ENCODE measurements at regions of chr1 and their contacts with region 1.

Region 1: GRCh38 chr1:11735854-11736745 is at the start of gene AGTRAP:
- DNase-seq: peak; percentile 91 to 94 (median 92)
- H3K4me3 ChIP-seq: peak within 1 kb of the TSS; percentile 85 to 93 (median 88)
- H3K4me3 Mint-ChIP-seq: peak within 1 kb of the TSS; percentile 93 to 98
- H3K27ac ChIP-seq: peak within 1 kb of the TSS; percentile 98
- H3K27ac Mint-ChIP-seq: peak within 1 kb of the TSS; percentile 98 to 100 (median 99)
- H3K4me1 ChIP-seq: peaks cover 83 to 90% of the 10 kb centered on the region in 2 donors
- H3K4me1 Mint-ChIP-seq: peaks cover 87% of the 10 kb centered on the region
- H3K27me3 ChIP-seq: no peaks in the 10 kb centered on the region
- H3K27me3 Mint-ChIP-seq: peaks cover 0 to 1% (median 1%) of the 10 kb centered on the region in 3 donors
- CTCF ChIP-seq: no peak
- polyA plus RNA-seq, gene AGTRAP: 420 to 938 (median 842) TPM

Region 2: DNA sequence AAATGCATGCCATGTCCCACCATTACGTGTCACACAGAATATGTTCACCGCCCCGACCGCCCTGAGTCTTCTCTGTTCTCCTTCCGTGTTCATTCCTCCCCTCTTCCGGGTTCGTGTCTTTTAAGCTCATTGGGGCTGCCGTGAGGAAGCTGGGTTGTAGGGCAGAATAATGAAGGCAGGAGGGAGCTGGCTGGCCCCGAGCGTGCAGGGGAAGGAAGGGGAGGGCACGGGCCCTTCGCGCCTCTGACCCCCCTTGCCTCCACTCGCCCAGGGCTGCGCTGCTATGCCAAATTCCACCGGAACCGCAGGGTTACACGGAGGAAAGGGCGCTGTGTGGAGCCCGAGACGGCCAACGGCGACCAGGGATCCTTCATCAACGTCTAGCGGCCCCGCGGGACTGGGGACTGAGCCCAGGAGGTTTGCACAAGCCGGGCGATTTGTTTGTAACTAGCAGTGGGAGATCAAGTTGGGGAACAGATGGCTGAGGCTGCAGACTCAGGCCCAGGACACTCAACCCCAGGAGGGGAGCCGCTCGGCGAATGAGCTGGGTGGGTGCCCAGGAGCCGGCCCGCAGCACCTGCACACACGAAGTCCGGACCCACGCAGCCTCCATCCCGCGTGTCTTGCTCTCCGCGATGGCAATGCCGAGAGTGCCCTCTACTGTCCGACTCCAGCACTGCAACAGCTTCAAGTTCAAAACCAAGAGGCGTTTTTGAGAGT is 16.6 kb before region 1 on chr1:
- intact Hi-C with region 1: loop called in 1 of 2 experiments (anchors 2 kb)
- DNase-seq: peak; percentile 84 to 89 (median 85)
- H3K4me3 ChIP-seq: peak overlapping the region; percentile 32 to 68 (median 45)
- H3K4me3 Mint-ChIP-seq: peak overlapping the region; percentile 81 to 89
- H3K27ac ChIP-seq: peak overlapping the region; percentile 76 to 84
- H3K27ac Mint-ChIP-seq: peak overlapping the region; percentile 91 to 96 (median 95)
- H3K4me1 ChIP-seq: peaks cover 33 to 41% of the 10 kb centered on the region in 2 donors
- H3K4me1 Mint-ChIP-seq: peaks cover 42% of the 10 kb centered on the region
- H3K27me3 ChIP-seq: no peaks in the 10 kb centered on the region
- H3K27me3 Mint-ChIP-seq: peaks cover 2 to 4% (median 4%) of the 10 kb centered on the region in 3 donors
- CTCF ChIP-seq: peak; percentile 98

Region 3: DNA sequence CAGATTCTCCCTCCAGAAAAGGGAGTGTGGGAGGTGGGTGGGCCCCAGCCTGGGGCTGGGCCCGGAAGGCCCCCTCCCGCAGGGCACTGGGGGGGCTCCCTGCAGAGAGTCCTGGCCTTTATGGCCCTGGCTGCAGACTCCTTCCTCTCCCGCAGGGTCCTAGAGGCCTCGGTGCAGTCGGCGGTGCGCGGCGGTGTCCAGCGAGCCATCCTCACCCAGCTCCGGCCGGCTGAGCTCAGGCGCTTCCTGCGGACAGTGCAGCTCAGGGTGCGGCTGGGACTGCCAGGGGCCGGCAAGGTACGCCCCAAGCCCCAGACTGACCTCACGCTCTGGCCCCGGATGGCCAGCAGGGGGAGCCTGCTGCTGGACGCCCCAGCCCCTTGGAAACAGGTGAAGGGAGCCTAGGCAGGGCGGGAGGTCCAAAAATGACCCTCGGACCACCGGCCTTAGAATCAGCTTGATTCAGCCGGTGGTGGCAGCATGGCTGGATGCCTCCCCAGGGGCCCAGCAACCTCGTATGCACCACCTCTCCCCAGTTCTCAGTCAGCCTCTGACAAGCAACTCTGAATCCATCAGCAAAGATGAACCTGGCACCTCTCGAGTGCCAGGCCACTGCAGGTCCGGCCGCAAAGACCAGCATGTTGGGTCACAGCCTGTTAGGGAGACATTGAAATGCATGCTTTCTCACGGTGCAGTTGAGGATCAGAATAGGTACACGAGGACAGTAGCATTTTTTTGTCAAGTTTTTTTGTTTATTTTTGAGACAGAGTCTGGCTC is 49.1 kb after region 1 on chr1:
- intact Hi-C with region 1: loop called (anchors 2 to 10 kb)
- DNase-seq: peak; percentile 55 to 68 (median 66)
- H3K4me3 ChIP-seq: peak overlapping the region in 1 of 3 experiments; percentile 65
- H3K4me3 Mint-ChIP-seq: peak overlapping the region; percentile 49 to 73
- H3K27ac ChIP-seq: no peak overlapping the region
- H3K27ac Mint-ChIP-seq: peak overlapping the region in 3 of 7 donors; percentile 36 to 45 (median 43)
- H3K4me1 ChIP-seq: peaks cover 19 to 29% of the 10 kb centered on the region in 2 donors
- H3K4me1 Mint-ChIP-seq: peaks cover 28% of the 10 kb centered on the region
- H3K27me3 ChIP-seq: no peaks in the 10 kb centered on the region
- H3K27me3 Mint-ChIP-seq: peaks cover 2 to 13% (median 5%) of the 10 kb centered on the region in 3 donors
- CTCF ChIP-seq: peak; percentile 92

Region 4: GRCh38 chr1:11790880-11791715 is 55.0 kb after region 1 on chr1:
- intact Hi-C with region 1: loop called in 1 of 2 experiments (anchors 10 kb)
- DNase-seq: peak; percentile 90 to 93 (median 92)
- H3K4me3 ChIP-seq: peak overlapping the region in 1 of 3 experiments; percentile 31
- H3K4me3 Mint-ChIP-seq: peak overlapping the region; percentile 62 to 64
- H3K27ac ChIP-seq: peak overlapping the region; percentile 94 to 97
- H3K27ac Mint-ChIP-seq: peak overlapping the region; percentile 95 to 100 (median 99)
- H3K4me1 ChIP-seq: peaks cover 31 to 41% of the 10 kb centered on the region in 2 donors
- H3K4me1 Mint-ChIP-seq: peaks cover 41% of the 10 kb centered on the region
- H3K27me3 ChIP-seq: no peaks in the 10 kb centered on the region
- H3K27me3 Mint-ChIP-seq: peaks cover 0 to 2% (median 2%) of the 10 kb centered on the region in 3 donors
- CTCF ChIP-seq: no peak

Region 5: GRCh38 chr1:11805447-11806306 is 69.6 kb after region 1 on chr1 and contains the starts of genes CLCN6 and MTHFR:
- intact Hi-C with region 1: loop called in 1 of 2 experiments (anchors 5 kb)
- DNase-seq: peak; percentile 99
- H3K4me3 ChIP-seq: peak within 1 kb of the TSS; percentile 72 to 84 (median 83)
- H3K4me3 Mint-ChIP-seq: peak within 1 kb of the TSS; percentile 94 to 99
- H3K27ac ChIP-seq: peak within 1 kb of the TSS; percentile 87 to 98
- H3K27ac Mint-ChIP-seq: peak within 1 kb of the TSS; percentile 99 to 100 (median 99)
- H3K4me1 ChIP-seq: peaks cover 54 to 66% of the 10 kb centered on the region in 2 donors
- H3K4me1 Mint-ChIP-seq: peaks cover 71% of the 10 kb centered on the region
- H3K27me3 ChIP-seq: no peaks in the 10 kb centered on the region
- H3K27me3 Mint-ChIP-seq: peaks cover 0 to 2% (median 1%) of the 10 kb centered on the region in 3 donors
- CTCF ChIP-seq: no peak
- polyA plus RNA-seq, gene CLCN6: 3.8 to 37.1 (median 4.2) TPM
- polyA plus RNA-seq, gene MTHFR: 4.5 to 41.9 (median 8.5) TPM

Region 6: GRCh38 chr1:11907275-11908094 is 171.4 kb after region 1 on chr1:
- intact Hi-C with region 1: loop called in 1 of 2 experiments (anchors 5 kb)
- DNase-seq: peak; percentile 93
- H3K4me3 ChIP-seq: peak overlapping the region in 1 of 3 experiments; percentile 79
- H3K4me3 Mint-ChIP-seq: peak overlapping the region in 1 of 2 donors; percentile 63
- H3K27ac ChIP-seq: peak overlapping the region; percentile 67 to 100
- H3K27ac Mint-ChIP-seq: peak overlapping the region; percentile 99 to 100 (median 100)
- H3K4me1 ChIP-seq: peaks cover 8 to 11% of the 10 kb centered on the region in 2 donors
- H3K4me1 Mint-ChIP-seq: peaks cover 15% of the 10 kb centered on the region
- H3K27me3 ChIP-seq: no peaks in the 10 kb centered on the region
- H3K27me3 Mint-ChIP-seq: peaks cover 1 to 8% (median 2%) of the 10 kb centered on the region in 3 donors
- CTCF ChIP-seq: peak; percentile 79

Region 7: DNA sequence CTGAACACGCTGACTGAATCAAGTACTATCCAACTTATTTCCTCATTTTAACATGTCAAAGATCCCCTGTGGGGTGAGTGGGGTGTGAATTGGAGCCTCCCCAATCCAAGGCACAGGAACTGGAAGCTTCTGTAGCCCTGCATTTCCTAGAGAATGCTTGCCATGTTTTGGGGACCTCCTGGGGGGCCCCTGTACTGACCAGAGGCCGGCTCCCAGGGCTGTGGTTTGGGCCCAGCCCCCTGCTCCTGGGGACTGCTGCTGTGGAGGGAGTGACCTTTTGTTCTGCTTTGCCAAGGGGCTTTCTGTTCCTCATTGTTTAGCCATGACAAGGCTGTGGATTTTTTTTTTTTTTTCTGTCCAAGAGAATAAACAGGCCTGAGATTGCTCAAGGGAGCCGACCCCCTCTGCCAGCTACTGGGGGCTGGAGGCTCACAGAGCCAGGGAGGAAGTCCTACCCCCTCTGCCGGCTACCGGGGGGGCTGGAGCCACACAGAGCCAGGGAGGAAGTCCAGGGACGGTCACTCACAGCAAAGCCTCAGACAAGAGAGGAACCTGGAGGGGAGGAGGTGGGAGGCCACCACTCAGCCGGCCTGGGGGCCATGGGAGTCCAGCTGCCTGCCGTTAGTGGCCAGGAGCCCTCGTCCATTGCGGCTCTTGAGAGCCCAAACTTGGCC is 448.0 kb after region 1 on chr1:
- intact Hi-C with region 1: loop called in 1 of 2 experiments (anchors 5 kb)
- DNase-seq: peak; percentile 95 to 98 (median 96)
- H3K4me3 ChIP-seq: peak overlapping the region; percentile 9 to 79 (median 46)
- H3K4me3 Mint-ChIP-seq: peak overlapping the region; percentile 83 to 94
- H3K27ac ChIP-seq: peak overlapping the region; percentile 96 to 100
- H3K27ac Mint-ChIP-seq: peak overlapping the region; percentile 98 to 100 (median 99)
- H3K4me1 ChIP-seq: peaks cover 92 to 100% of the 10 kb centered on the region in 2 donors
- H3K4me1 Mint-ChIP-seq: peaks cover 98% of the 10 kb centered on the region
- H3K27me3 ChIP-seq: no peaks in the 10 kb centered on the region
- H3K27me3 Mint-ChIP-seq: peaks cover 0 to 2% (median 0%) of the 10 kb centered on the region in 3 donors
- CTCF ChIP-seq: peak; percentile 46

Region 8: DNA sequence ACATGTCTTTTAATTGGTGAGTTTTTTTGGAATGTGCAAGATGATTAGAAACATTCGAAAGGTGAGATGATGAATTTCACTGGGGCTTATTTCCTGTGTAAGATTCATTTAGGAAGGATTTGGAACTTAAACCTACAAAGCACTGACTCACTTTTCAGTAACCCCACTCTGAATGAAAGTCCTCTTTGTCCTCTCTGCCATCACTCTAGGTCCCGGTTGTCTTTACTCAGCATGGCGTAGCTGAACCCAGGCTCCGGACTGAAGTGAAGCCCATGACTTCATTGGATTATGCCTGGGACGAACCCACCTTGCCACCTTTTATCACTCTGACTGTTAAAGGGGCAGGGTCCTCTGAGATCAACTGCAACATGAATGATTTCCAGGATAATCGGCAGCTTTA is 633.2 kb after region 1 on chr1:
- intact Hi-C with region 1: no loop called
- DNase-seq: no peak
- H3K4me3 ChIP-seq: no peak overlapping the region
- H3K4me3 Mint-ChIP-seq: no peak overlapping the region
- H3K27ac ChIP-seq: no peak overlapping the region
- H3K27ac Mint-ChIP-seq: peak overlapping the region in 1 of 7 donors; percentile 46
- H3K4me1 ChIP-seq: no peaks in the 10 kb centered on the region
- H3K4me1 Mint-ChIP-seq: no peaks in the 10 kb centered on the region
- H3K27me3 ChIP-seq: no peaks in the 10 kb centered on the region
- H3K27me3 Mint-ChIP-seq: no peaks in the 10 kb centered on the region
- CTCF ChIP-seq: no peak

Measured in CD14-positive monocyte (primary cell).